ENCODE measurements at regions of chr18 and their contacts with region 1.

Region 1: GRCh38 chr18:27778441-27778840 is 398.5 kb downstream of the CDH2 start:
- DNase-seq: no peak
- ATAC-seq: no peak
- H3K4me3 ChIP-seq: no peak overlapping the region
- H3K27ac ChIP-seq: no peak overlapping the region
- H3K4me1 ChIP-seq: no peaks in the 10 kb centered on the region
- H3K27me3 ChIP-seq: no peaks in the 10 kb centered on the region
- CTCF ChIP-seq: peak; percentile 27; the same call in 1 of the 2 replicates

Region 2: GRCh38 chr18:27843783-27844777 is 65.6 kb after region 1 on chr18:
- CTCF ChIA-PET with region 1: no interaction called
- POLR2A ChIA-PET with region 1: no interaction called
- in situ Hi-C with region 1: no loop called
- intact Hi-C with region 1: loop called (anchors 5 kb)
- DNase-seq: no peak
- ATAC-seq: no peak
- H3K4me3 ChIP-seq: no peak overlapping the region
- H3K27ac ChIP-seq: no peak overlapping the region
- H3K4me1 ChIP-seq: peaks cover 12% of the 10 kb centered on the region; the same call in 1 of the 2 replicates
- H3K27me3 ChIP-seq: no peaks in the 10 kb centered on the region
- CTCF ChIP-seq: no peak

Region 3: DNA sequence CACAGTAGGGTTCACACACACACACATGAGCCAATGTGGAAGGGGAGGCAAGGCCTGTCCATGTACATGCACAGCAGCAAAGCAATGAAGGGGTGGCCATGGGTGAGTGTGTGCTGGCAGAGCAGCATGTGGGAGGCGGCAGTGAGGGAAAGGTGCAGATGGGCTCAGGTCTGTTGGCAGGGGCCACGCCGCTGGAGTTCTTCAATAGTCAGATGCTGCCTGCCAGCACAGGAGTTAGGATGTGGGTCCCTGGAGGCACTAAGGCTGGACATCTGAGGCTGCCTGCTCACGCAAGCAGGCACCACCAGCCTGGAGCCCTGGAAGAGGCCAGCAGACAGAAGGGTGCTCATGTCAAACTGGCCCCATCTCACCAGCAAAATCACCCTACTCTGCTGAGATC is 1959.2 kb after region 1 on chr18:
- CTCF ChIA-PET with region 1: no interaction called
- POLR2A ChIA-PET with region 1: no interaction called
- in situ Hi-C with region 1: no loop called
- intact Hi-C with region 1: no loop called
- DNase-seq: no peak
- ATAC-seq: no peak
- H3K4me3 ChIP-seq: no peak overlapping the region
- H3K27ac ChIP-seq: no peak overlapping the region
- H3K4me1 ChIP-seq: no peaks in the 10 kb centered on the region
- H3K27me3 ChIP-seq: no peaks in the 10 kb centered on the region
- CTCF ChIP-seq: no peak